Activated CD4-positive, alpha-beta T cell treated with anti-CD3 and anti-CD28 coated beads, Interleukin-2, amount 10 ng/mL, durations not matched to agents 24 days and 14 days (primary cell): ENCODE measurements at regions of chr5 and their contacts with region 1.

Region 1: GRCh38 chr5:54793468-54794134 is 191.8 kb downstream of the ESM1 start:
- DNase-seq: peak; percentile 66
- H3K4me3 Mint-ChIP-seq: peak overlapping the region; percentile 43
- H3K27ac Mint-ChIP-seq: peak overlapping the region; percentile 88
- H3K4me1 Mint-ChIP-seq: peaks cover 34% of the 10 kb centered on the region
- H3K27me3 Mint-ChIP-seq: peaks cover 16% of the 10 kb centered on the region

Region 2: GRCh38 chr5:54778783-54779182 is 14.8 kb before region 1 on chr5:
- intact Hi-C with region 1: no loop called
- DNase-seq: peak; percentile 40
- H3K4me3 Mint-ChIP-seq: no peak overlapping the region
- H3K27ac Mint-ChIP-seq: no peak overlapping the region
- H3K4me1 Mint-ChIP-seq: no peaks in the 10 kb centered on the region
- H3K27me3 Mint-ChIP-seq: peaks cover 42% of the 10 kb centered on the region

Region 3: GRCh38 chr5:54844905-54845566 is 51.4 kb after region 1 on chr5:
- intact Hi-C with region 1: loop called (anchors 2 kb)
- DNase-seq: peak; percentile 68
- H3K4me3 Mint-ChIP-seq: peak overlapping the region; percentile 56
- H3K27ac Mint-ChIP-seq: peak overlapping the region; percentile 18
- H3K4me1 Mint-ChIP-seq: peaks cover 13% of the 10 kb centered on the region
- H3K27me3 Mint-ChIP-seq: peaks cover 22% of the 10 kb centered on the region

Region 4: DNA sequence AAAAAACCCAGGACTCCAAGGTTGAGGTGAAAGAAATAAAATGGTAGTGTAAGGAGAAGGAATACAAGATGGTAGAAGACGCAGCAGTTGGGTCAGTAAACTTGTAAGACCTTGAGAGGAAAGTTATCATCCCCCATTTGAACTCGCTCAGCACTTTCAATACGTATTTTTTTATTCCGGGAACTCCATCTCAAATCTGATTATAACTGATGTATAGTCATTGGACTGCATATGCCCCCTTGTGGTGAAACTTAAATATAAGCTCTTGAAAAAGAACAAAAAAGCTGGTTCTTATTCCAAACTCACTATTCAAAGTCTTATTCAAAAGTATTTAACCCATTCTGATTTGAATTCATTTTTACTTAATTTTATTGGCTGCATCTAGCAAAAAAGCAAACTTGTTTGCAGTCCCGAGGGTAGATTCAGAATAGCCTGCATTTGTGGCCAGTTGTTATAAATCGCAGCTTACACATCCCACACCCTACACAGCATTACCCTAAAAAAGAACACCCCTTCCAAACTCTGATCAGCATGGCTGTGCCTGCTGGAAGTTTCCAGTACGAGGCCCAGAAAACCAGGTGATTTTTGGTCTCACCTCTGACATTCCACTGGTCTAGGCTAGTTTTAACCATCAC is 73.8 kb after region 1 on chr5:
- intact Hi-C with region 1: loop called (anchors 2 kb)
- DNase-seq: peak; percentile 67
- H3K4me3 Mint-ChIP-seq: no peak overlapping the region
- H3K27ac Mint-ChIP-seq: no peak overlapping the region
- H3K4me1 Mint-ChIP-seq: peaks cover 22% of the 10 kb centered on the region
- H3K27me3 Mint-ChIP-seq: peaks cover 65% of the 10 kb centered on the region